Cardiac septum (tissue), 1 donor: ENCODE measurements at regions of chr5 and their contacts with region 1.

Region 1: GRCh38 chr5:14264604-14265316 is 121.6 kb downstream of the TRIO start:
- DNase-seq: peak; percentile 94

Region 2: GRCh38 chr5:13831351-13831750 is 433.4 kb before region 1 on chr5:
- intact Hi-C with region 1: no loop called
- DNase-seq: no peak

Region 3: GRCh38 chr5:14204785-14205321 is 59.9 kb before region 1 on chr5:
- intact Hi-C with region 1: loop called (anchors 5 kb)
- DNase-seq: no peak